Posterior cingulate gyrus (tissue), 11 donors: ENCODE measurements at regions of chr3 and their contacts with region 1.

Region 1: GRCh38 chr3:39107388-39108199 is at the starts of genes GORASP1 and TTC21A:
- DNase-seq: peak; percentile 90 to 99 (median 93)

Region 2: DNA sequence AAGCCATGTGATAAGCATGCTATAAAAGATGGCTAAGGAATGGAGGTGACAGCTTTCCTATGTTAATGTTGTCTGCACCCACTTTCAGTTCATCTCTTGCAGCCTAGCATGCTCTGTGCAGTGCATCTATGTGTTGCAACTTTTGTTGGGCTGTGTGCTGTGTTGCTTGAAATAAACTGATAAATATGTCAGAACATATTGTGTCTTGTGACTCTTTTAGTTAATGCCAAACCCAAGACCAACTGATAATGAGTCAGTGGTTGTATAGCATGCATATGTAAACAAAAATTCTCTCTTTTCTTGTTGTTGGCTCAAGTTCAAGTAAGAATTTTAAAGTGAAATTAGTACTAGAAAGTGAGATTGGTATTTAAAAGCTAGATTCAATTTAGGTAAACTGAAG is 254.6 kb before region 1 on chr3:
- intact Hi-C with region 1: no loop called
- DNase-seq: no peak

Region 3: GRCh38 chr3:38985581-38985980 is 122.0 kb before region 1 on chr3:
- intact Hi-C with region 1: no loop called
- DNase-seq: no peak

Region 4: GRCh38 chr3:39051647-39052561 is 55.7 kb before region 1 on chr3 and contains the starts of genes SCN11A and WDR48:
- intact Hi-C with region 1: loop called (anchors 5 kb)
- DNase-seq: peak; percentile 94 to 99 (median 96)

Region 5: DNA sequence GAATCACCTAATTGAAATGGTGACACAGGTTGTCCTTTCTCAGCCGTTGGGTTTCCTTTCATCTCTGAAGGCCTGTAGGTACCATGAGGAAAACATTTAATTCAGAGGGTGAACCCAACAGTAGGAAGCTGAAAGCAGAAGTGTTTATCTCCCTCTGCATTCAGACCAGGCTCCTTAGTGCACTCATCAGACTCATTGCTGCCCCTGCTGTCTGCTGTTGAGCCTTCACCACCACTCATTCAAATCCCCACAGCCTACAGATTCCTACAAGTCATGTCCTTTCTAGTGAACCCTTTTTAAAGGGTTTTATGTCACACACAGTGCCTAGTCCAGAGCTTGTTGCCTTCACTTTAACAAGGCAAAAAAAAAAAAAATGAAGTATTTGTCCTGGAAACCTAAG is 42.4 kb before region 1 on chr3:
- intact Hi-C with region 1: no loop called
- DNase-seq: peak in 3 of 10 donors; percentile 11 to 14 (median 14)

Region 6: DNA sequence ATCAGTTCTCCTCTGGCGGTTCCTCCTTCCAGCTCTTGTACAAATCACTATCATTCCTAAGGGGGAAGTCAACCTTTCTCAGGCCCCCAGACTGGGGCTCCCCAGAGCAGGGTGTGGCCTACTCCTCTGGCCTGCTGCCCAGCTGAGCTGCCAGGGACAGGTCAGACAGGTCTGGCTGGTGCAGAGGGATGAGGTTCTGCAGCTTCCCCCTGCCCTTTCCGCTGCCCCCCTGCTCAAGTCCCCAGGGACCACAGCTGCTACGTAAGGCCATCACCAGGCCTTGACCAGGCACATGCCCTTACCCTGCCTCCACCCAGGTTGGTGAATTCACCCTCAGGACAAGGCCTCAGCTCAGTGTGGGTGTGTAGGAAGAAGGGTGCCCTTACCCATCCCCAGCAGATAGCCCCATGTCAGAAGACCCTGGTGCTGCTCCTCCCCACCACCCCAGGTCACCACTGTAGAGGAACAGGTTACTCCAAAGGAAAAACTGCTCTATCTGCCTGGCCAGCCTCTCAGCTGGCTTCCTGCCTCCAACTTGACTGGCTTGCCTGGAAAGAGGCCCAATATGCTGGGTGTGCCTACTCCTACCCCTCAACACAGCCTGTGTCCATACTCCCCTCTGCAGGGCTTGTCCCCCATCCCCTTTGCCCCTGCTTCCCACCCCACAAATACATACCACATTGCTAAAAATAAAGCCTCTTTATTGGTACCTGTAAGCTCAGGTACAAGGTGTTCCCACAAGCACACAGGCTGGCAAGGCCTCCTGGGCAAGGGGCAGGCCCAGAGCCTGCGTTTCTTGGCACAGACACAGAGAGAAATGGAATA is 33.8 kb after region 1 on chr3:
- intact Hi-C with region 1: loop called (anchors 5 kb)
- DNase-seq: peak in 1 of 10 donors; percentile 75

Region 7: DNA sequence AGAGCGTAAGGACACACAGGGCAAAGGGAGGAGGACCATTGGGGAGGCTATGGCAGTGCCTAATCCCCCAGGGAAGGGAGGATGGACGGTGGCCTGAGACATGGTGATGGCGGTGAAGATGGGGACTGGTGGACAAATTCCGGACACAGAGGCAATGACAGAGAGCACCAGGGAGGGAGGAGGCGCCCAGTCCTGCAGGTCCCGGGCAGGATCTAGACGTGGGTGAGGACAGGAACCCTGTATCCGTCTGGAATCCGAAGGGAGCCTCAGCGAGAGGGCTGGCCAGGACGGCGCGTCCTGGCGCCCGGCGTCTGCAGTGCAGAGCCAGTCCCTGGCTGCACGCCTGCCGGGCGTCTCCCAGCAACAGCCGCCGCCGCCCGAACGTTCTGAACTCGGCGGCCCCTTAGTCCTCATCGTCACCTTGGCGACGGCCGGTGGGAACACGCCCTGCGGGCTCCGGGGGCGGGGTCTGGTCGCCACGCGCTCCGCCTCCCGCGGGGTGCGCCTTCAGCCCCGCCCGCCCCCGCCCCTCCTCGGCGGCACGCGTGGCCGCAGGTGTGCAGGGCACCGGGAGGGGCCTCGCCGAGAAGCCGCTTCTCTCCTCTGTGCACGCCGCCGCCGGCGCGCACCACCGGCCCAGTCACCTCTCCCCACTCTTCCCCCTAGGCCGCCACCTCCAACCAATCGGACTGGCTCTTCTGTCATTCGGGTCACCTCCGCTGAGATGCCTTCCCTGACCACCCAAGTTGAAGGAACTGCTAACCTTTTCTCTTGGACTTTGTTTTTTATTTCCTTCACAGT is 73.2 kb after region 1 on chr3:
- intact Hi-C with region 1: loop called (anchors 10 kb)
- DNase-seq: peak in 9 of 10 donors; percentile 54 to 95 (median 72)

Region 8: DNA sequence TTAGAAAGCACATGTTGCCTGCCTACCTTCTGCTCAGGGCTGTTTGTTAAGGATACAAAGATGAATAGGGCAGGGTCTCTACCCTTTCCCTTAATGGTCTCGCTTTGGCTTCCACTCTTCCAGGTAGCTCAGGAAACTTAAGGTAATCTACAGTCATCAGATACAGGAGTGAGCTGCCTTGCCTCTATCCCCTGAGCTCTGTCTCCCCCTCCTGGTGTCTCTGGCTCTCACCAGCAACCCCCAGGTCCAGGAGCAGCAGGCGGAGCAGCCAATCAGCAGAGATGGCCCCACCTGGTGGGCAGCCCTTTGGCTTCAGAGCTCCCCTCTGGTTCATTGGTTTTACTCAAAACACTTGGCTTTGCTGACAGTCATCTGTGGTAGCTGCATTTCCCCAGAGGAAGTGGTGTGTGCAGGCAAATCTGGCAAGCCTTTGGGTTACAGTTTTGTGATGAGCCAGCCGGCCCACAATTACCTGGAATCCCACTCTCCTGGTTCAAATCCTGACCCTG is 180.8 kb after region 1 on chr3:
- intact Hi-C with region 1: loop called (anchors 5 kb)
- DNase-seq: peak; percentile 57 to 96 (median 80)

Region 9: GRCh38 chr3:39383045-39383880 is 275.7 kb after region 1 on chr3 and contains the start of gene SLC25A38:
- intact Hi-C with region 1: loop called (anchors 2 kb)
- DNase-seq: peak; percentile 67 to 98 (median 90)

Region 10: GRCh38 chr3:39460677-39461076 is 353.1 kb after region 1 on chr3:
- intact Hi-C with region 1: no loop called
- DNase-seq: peak in 9 of 10 donors; percentile 34 to 95 (median 64)